ENCODE measurements at regions of chr15 and their contacts with region 1.

Region 1: DNA sequence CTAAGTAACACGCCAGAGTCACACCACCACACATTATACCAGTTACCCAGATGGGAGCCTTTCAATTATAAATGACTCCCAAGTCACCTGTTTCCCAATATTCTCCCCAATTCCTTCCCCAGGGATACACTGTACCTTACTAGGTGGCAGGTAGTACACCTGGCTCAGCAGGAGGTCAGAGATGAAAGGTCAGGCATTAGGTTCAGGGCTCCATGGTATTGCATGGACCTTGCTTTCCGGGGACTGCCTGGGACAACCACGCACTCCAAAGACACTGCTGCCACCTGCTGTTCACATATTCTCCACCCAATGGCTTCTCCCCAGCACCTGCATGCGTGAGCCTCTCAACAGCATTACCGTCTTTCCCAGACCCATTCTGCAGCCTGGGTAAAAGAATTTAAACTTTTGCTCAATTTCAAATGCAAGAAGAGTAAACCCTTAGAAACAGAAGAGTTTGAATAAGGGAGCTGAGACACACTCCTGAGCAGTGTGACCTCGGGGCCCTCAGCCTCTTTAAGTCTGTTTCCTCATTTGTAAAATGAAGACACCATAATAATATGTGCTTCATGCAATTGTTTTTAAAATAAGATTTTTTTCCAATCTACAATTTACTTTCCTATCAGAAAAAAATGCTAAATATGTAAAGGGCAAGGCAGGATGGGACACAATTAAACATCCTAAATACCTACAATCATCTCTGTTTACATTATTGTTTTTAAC is 28.0 kb upstream of the LACTB start:
- DNase-seq: peak; percentile 82
- H3K4me3 Mint-ChIP-seq: no peak overlapping the region
- H3K27ac Mint-ChIP-seq: no peak overlapping the region
- H3K4me1 Mint-ChIP-seq: peaks cover 7% of the 10 kb centered on the region
- H3K27me3 Mint-ChIP-seq: no peaks in the 10 kb centered on the region
- CTCF ChIP-seq: peak; percentile 85

Region 2: DNA sequence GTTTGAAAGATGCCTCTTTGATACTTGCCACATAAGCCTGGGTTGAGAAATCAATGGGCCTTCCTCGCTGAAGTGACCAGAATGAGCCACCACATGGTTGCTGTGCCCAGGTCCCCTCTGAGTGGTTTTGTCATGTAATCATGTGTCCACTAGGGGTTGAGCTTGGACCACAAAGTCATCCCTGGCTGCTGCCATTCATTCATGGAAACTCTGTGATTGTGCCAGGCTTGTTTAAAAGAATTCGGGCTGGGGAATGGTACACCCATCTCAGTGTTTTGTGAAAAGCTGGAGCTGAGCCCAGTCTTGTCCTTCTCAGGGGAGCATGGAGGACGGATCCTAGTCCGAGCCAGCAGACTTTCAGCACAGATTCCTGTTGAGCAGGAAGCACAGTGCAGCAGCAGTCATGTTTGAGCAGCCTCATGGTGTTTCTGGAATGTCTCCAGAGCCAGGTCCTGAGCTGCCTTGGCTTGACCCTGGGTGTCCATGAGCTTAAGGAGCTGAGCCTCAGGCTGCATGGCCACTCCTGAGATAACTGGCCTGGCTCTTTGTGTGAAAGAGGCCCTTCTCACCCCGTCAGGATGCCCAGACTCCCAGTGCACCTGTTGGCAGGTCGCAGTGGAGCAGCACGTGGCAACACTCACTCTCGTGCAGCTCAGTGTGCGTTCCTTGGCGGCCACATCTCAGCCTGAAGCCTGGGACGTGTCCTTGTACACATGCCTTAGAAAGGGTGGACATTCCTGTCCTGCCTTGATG is 311.4 kb before region 1 on chr15:
- CTCF ChIA-PET with region 1: interaction called, 54 read pairs
- POLR2A ChIA-PET with region 1: no interaction called
- intact Hi-C with region 1: loop called (anchors 1 kb)
- DNase-seq: peak; percentile 86
- H3K4me3 Mint-ChIP-seq: no peak overlapping the region
- H3K27ac Mint-ChIP-seq: no peak overlapping the region
- H3K4me1 Mint-ChIP-seq: peaks cover 28% of the 10 kb centered on the region
- H3K27me3 Mint-ChIP-seq: no peaks in the 10 kb centered on the region
- CTCF ChIP-seq: peak; percentile 71

Region 3: GRCh38 chr15:62847900-62848489 is 245.7 kb before region 1 on chr15:
- CTCF ChIA-PET with region 1: interaction called, 35 read pairs
- POLR2A ChIA-PET with region 1: no interaction called
- intact Hi-C with region 1: loop called (anchors 1 kb)
- DNase-seq: peak; percentile 75
- H3K4me3 Mint-ChIP-seq: no peak overlapping the region
- H3K27ac Mint-ChIP-seq: no peak overlapping the region
- H3K4me1 Mint-ChIP-seq: peaks cover 10% of the 10 kb centered on the region
- H3K27me3 Mint-ChIP-seq: no peaks in the 10 kb centered on the region
- CTCF ChIP-seq: peak; percentile 62

Region 4: DNA sequence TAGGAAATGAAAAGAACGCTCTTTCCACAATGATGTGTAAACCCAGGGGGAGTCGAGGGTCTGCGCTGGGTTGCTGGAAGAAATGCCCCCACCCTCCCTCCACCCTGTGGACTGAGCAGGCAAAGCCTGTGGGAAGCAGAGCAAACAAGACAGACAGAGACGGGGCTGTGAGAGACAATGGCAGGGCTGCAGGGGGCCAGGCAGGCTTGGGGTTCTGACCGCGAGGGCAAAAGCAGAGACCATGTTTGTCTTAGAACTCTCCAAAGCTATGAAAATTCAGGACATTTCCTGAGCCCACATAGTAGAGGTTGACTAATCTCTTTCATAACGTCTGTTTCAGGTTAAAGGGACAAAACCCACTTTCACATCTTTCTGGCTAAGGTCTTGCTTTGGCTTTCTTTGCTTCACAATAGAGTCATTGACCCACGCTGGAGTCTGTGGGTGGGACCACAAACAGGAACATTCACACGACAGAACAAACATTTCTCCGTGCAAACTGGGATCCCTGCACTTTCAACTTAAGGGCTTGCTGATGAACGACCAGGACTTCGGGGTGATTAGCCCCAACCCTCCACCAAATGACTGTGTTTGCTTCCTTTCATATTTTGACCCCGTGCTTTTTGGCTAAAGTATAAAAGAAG is 207.1 kb before region 1 on chr15:
- CTCF ChIA-PET with region 1: no interaction called
- POLR2A ChIA-PET with region 1: no interaction called
- intact Hi-C with region 1: no loop called
- DNase-seq: no peak
- H3K4me3 Mint-ChIP-seq: no peak overlapping the region
- H3K27ac Mint-ChIP-seq: no peak overlapping the region
- H3K4me1 Mint-ChIP-seq: peaks cover 17% of the 10 kb centered on the region
- H3K27me3 Mint-ChIP-seq: no peaks in the 10 kb centered on the region
- CTCF ChIP-seq: no peak

Region 5: GRCh38 chr15:63038926-63039673 is 54.5 kb before region 1 on chr15:
- CTCF ChIA-PET with region 1: interaction called, 109 read pairs
- POLR2A ChIA-PET with region 1: interaction called, 3 read pairs
- intact Hi-C with region 1: no loop called
- DNase-seq: no peak
- H3K4me3 Mint-ChIP-seq: no peak overlapping the region
- H3K27ac Mint-ChIP-seq: no peak overlapping the region
- H3K4me1 Mint-ChIP-seq: peaks cover 13% of the 10 kb centered on the region
- H3K27me3 Mint-ChIP-seq: no peaks in the 10 kb centered on the region
- CTCF ChIP-seq: no peak

Region 6: DNA sequence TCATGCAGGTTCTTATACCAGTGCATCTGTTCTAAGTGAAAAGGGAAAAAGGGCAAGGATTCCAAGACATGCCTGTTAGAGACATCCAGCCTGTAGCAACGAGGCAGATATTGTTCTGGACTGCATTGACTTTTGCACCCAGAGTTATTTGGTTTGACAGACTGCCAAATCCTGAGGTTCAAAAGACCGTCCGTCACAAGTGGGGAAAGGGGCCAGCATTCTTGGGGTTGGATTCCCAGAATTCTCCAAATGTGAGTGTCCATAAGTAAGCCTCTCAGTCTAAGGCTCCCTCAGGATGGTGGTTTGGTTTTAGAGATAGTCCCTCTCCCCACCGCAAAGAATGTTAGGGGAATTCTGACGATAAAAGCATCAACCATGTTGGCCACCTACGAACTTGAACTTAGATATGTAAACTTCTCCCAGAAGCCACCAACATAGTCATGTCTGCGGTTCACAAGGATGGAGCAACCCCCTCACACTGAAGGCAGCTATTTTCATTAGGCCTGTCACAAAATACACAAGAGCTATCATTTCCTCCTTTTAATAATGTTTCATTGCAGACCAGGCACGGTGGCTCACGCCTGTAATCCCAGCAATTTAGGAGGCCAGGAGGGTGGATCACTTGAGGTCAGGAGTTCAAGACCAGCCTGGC is 14.4 kb after region 1 on chr15:
- CTCF ChIA-PET with region 1: interaction called, 13 read pairs
- POLR2A ChIA-PET with region 1: no interaction called
- intact Hi-C with region 1: no loop called
- DNase-seq: peak; percentile 92
- H3K4me3 Mint-ChIP-seq: no peak overlapping the region
- H3K27ac Mint-ChIP-seq: no peak overlapping the region
- H3K4me1 Mint-ChIP-seq: peaks cover 9% of the 10 kb centered on the region
- H3K27me3 Mint-ChIP-seq: no peaks in the 10 kb centered on the region
- CTCF ChIP-seq: no peak

Region 7: GRCh38 chr15:63277038-63277892 is 183.6 kb after region 1 on chr15 and contains the start of gene APH1B:
- CTCF ChIA-PET with region 1: no interaction called
- POLR2A ChIA-PET with region 1: no interaction called
- intact Hi-C with region 1: loop called (anchors 1 kb)
- DNase-seq: peak; percentile 62
- H3K4me3 Mint-ChIP-seq: peak within 1 kb of the TSS; percentile 78
- H3K27ac Mint-ChIP-seq: peak within 1 kb of the TSS; percentile 55
- H3K4me1 Mint-ChIP-seq: peaks cover 10% of the 10 kb centered on the region
- H3K27me3 Mint-ChIP-seq: no peaks in the 10 kb centered on the region
- CTCF ChIP-seq: no peak
- total RNA-seq, gene APH1B: 5.2 and 8.2 TPM in 2 replicates